CD4-positive, alpha-beta T cell (primary cell): ENCODE measurements at regions of chr17 and their contacts with region 1.

Region 1: DNA sequence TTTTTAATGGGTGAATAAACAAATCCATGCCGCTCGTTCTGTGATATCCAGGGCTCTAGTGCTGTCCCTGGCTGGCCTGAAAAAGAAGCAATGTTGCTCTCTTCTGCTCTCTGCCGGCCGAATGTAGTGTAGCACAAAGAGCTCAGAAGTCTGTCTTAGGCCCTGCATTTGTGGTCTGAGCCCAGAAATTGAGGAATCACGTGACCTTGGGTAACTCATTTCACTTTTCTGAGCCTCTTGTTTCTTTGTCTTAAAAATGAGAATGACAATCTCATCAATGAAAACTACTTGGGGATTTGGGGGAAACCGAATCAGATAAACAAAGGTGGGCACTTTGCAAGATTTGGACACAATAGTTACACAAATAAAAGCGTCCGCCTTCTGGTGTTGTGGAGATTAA is 381.6 kb upstream of the ASIC2 start:
- DNase-seq: peak in 13 of 14 experiments; percentile 2 to 61 (median 16)
- ATAC-seq: peak; percentile 76
- H3K4me3 ChIP-seq: no peak overlapping the region
- H3K4me3 Mint-ChIP-seq: no peak overlapping the region
- H3K27ac ChIP-seq: no peak overlapping the region
- H3K27ac Mint-ChIP-seq: no peak overlapping the region
- H3K4me1 ChIP-seq: no peaks in the 10 kb centered on the region
- H3K4me1 Mint-ChIP-seq: no peaks in the 10 kb centered on the region
- H3K27me3 ChIP-seq: no peaks in the 10 kb centered on the region
- H3K27me3 Mint-ChIP-seq: no peaks in the 10 kb centered on the region
- CTCF ChIP-seq: peak; percentile 53

Region 2: GRCh38 chr17:33520426-33521330 is 154.0 kb before region 1 on chr17:
- CTCF ChIA-PET with region 1: no interaction called
- POLR2A ChIA-PET with region 1: no interaction called
- intact Hi-C with region 1: loop called in 1 of 2 experiments (anchors 1 kb)
- DNase-seq: peak in 11 of 14 experiments; percentile 1 to 43 (median 10)
- ATAC-seq: no peak
- H3K4me3 ChIP-seq: no peak overlapping the region
- H3K4me3 Mint-ChIP-seq: no peak overlapping the region
- H3K27ac ChIP-seq: no peak overlapping the region
- H3K27ac Mint-ChIP-seq: no peak overlapping the region
- H3K4me1 ChIP-seq: no peaks in the 10 kb centered on the region
- H3K4me1 Mint-ChIP-seq: no peaks in the 10 kb centered on the region
- H3K27me3 ChIP-seq: peaks cover 0 to 2% of the 10 kb centered on the region in 2 experiments
- H3K27me3 Mint-ChIP-seq: peaks cover 9% of the 10 kb centered on the region
- CTCF ChIP-seq: peak; percentile 49